PC-9 (cell line): ENCODE measurements at regions of chr1 and their contacts with region 1.

Region 1: GRCh38 chr1:153324912-153325311 is 12.2 kb upstream of the PGLYRP3 start:
- DNase-seq: no peak
- H3K4me3 ChIP-seq: no peak overlapping the region
- H3K27ac ChIP-seq: no peak overlapping the region
- H3K4me1 ChIP-seq: no peaks in the 10 kb centered on the region
- H3K27me3 ChIP-seq: no peaks in the 10 kb centered on the region; the same call in none of the 2 replicates
- CTCF ChIP-seq: no peak

Region 2: DNA sequence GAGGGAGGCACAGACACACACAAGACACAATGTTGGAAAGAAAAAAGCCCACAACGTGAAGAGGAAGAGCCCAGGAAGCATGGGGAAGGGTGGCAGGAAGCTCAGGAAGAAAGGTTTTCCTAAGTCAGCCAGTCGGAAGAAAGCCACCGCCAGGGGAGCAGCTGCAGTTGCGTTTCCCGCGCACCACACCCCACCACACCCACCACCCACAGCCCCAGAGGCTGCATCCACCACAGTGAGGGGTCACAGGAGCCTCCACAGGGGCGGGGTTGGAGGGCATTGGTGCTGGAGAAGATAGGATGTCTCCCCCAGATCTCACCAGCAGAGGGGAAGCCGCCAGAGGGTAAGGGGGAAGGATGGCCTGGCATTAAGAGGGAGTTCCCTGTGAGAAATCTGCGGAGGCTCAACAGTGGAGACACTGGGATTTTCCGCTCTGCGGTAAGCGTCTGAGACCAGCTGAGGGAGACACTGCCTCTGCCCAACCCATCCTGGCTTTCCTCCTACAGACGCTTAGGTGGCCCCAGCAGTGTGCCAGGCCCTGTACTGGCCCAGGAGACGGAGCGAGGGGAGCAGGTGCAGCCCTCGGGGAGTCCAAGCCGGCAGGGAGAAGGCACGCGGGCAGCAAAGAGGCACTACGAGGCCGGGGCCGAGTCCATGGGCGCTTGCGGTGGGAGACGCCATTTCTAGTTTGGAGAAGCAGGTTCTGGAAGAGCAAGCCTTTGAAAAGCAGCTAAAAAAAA is 32.0 kb before region 1 on chr1:
- CTCF ChIA-PET with region 1: no interaction called
- POLR2A ChIA-PET with region 1: no interaction called
- intact Hi-C with region 1: no loop called
- DNase-seq: no peak
- H3K4me3 ChIP-seq: no peak overlapping the region
- H3K27ac ChIP-seq: no peak overlapping the region
- H3K4me1 ChIP-seq: 0 out of 2 replicates have a peak, but pooled peaks cover 6% of the 10 kb centered on the region
- H3K27me3 ChIP-seq: peaks cover 10% of the 10 kb centered on the region; the same call in 1 of the 2 replicates
- CTCF ChIP-seq: no peak

Region 3: DNA sequence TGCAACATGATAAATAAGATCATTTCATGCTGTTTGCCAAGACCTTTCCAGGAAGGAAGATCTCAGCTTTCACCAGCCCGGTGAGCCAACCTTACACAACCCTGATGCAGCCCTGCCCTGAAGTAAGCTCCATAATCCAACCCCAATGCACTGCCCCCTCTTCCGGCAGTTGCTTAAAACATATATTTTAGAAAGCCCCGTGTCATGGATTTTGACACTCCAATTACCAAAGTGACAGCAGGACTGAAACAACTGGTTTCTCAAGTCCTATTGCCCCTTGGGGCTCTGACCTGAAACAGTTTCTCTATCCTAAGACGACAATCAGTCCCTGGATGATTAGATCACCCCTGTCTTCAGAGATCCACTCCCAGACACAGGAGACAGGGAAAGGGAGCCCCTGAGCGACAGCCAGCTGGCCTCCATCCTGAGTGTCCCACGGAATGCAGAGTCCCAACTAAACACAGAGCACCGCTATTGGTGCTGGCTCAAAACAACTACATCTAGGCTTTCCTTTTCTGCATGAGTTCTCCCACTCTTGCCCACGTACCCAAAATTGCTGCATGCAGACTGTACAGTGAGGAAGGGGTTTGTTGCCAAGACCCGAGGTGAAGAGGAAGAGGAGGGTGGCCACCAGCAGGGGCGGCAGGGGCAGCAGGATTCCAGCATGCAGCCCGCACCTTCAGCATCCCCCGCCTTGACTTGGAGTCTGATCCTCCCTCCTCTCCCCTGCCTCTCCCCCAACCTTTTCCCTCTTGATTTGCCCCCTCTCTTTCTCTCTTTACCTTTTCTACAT is 40.6 kb after region 1 on chr1:
- CTCF ChIA-PET with region 1: no interaction called
- POLR2A ChIA-PET with region 1: no interaction called
- intact Hi-C with region 1: no loop called
- DNase-seq: peak; percentile 68 to 99
- H3K4me3 ChIP-seq: peak overlapping the region; percentile 26; the same call in 1 of the 2 replicates
- H3K27ac ChIP-seq: peak overlapping the region; percentile 96
- H3K4me1 ChIP-seq: peaks cover 90% of the 10 kb centered on the region
- H3K27me3 ChIP-seq: no peaks in the 10 kb centered on the region
- CTCF ChIP-seq: peak; percentile 62

Region 4: GRCh38 chr1:154212083-154212482 is 887.2 kb after region 1 on chr1:
- CTCF ChIA-PET with region 1: no interaction called
- POLR2A ChIA-PET with region 1: interaction called, 16 read pairs
- intact Hi-C with region 1: no loop called
- DNase-seq: no peak
- H3K4me3 ChIP-seq: no peak overlapping the region
- H3K27ac ChIP-seq: no peak overlapping the region
- H3K4me1 ChIP-seq: no peaks in the 10 kb centered on the region
- H3K27me3 ChIP-seq: no peaks in the 10 kb centered on the region
- CTCF ChIP-seq: no peak